Activated naive CD4-positive, alpha-beta T cell treated with anti-CD3 and anti-CD28 coated beads, Interleukin-2, amount 10 ng/mL, durations not matched to agents 7 days and 5 days (primary cell): ENCODE measurements at regions of chr11 and their contacts with region 1.

Region 1: DNA sequence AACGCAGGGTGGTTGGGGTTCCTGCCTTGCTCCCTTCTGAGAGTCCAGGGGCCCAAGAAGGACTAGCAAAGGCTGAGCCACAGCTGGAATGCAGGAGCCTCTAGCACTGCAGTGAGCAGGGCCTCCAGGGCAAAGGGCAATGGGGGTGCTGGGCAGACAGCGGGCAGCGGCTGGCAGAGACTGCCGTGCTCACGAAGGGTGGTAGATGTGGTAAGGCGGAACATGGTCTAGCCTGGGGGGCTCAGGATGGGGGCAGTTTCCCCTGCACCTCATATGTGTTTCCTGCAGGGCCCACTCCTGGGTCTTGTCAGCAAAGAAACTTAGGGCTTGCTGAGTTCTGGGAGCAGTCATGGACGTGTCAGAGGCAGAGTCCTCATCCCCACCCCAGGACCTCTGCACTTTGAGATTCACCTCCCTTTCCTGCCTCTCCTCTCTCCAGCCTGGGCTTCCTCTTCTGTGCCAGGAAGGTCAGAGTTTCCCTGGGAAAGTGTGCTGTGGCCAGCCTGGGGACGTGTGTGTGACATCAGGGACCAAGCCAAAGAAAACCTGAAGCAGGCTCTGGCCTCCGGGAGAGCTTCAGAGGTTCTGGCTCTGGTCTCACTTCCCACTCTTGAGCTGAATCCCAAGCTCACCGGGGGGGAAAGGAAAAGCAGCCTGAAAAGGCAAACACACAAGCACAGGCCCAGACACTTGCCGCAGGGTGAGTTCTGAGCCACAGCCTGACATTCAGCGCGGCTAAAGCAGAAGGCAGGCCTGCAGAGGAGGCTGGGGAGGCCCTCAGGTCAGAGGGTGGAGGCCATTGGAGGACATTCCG is 4.4 kb downstream of the MOGAT2 start:
- DNase-seq: no peak
- H3K4me3 Mint-ChIP-seq: no peak overlapping the region
- H3K27ac Mint-ChIP-seq: no peak overlapping the region
- H3K4me1 Mint-ChIP-seq: peaks cover 2% of the 10 kb centered on the region
- H3K27me3 Mint-ChIP-seq: peaks cover 25% of the 10 kb centered on the region

Region 2: DNA sequence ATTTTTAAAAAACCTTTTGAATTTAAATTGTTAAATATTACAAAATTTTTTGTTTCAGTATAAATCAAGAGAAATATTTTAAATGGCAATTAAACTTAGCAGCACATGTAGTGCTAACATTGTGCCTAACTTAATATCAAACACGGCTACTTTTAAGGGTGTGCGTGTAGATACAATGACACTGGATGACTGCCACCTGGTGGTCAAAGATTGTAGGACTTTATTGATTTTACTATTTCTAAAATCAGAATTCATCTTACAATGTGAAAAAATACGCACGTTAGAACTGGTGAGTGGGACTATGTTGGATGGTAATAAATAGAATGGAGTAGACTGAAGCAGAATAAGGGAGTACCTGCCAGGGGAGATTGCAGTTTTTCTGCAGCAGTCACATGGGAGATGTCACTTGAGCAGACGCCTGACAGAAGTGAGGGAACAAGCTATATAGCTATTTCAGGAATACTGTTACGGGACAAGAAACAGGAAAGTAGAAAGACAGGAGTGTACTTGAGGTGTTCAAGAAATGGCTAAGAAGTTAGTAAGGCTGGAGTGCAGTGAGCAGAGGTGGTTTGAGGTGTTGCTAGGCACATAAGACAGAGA is 145.8 kb after region 1 on chr11:
- CTCF ChIA-PET with region 1: interaction called, 14 read pairs
- DNase-seq: peak; percentile 56
- H3K4me3 Mint-ChIP-seq: no peak overlapping the region
- H3K27ac Mint-ChIP-seq: no peak overlapping the region
- H3K4me1 Mint-ChIP-seq: peaks cover 4% of the 10 kb centered on the region
- H3K27me3 Mint-ChIP-seq: no peaks in the 10 kb centered on the region

Region 3: DNA sequence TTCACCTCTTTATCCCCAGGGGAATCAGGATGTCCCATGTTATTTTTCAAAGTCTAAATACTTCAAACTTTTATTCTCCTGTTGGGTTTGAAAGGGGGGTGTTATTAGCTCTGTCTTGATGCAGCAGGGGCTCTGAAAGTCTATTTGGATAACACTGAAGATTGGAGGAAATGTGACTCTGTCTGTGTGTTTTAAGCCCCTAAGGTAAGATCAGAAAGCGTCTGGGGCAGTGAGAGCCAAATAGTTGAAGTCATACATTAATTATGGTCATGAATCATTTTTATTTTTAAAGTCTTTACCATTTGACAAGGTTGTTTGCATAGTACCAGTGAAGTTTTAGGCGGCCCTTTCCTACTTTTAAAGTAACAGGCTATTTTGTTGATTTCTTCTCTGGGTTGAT is 232.0 kb after region 1 on chr11:
- CTCF ChIA-PET with region 1: no interaction called
- DNase-seq: no peak
- H3K4me3 Mint-ChIP-seq: no peak overlapping the region
- H3K27ac Mint-ChIP-seq: no peak overlapping the region
- H3K4me1 Mint-ChIP-seq: no peaks in the 10 kb centered on the region
- H3K27me3 Mint-ChIP-seq: no peaks in the 10 kb centered on the region